Activated CD8-positive, alpha-beta T cell treated with anti-CD3 and anti-CD28 coated beads, Interleukin-2, amount 10 ng/mL, durations not matched to agents 7 days and 5 days (primary cell): ENCODE measurements at regions of chr17 and their contacts with region 1.

Region 1: GRCh38 chr17:31373150-31374093 is 18.1 kb upstream of the RAB11FIP4 start:
- DNase-seq: peak; percentile 60
- ATAC-seq: peak; percentile 93
- H3K4me3 Mint-ChIP-seq: no peak overlapping the region
- H3K27ac Mint-ChIP-seq: no peak overlapping the region
- H3K4me1 Mint-ChIP-seq: peaks cover 16% of the 10 kb centered on the region
- H3K27me3 Mint-ChIP-seq: no peaks in the 10 kb centered on the region

Region 2: DNA sequence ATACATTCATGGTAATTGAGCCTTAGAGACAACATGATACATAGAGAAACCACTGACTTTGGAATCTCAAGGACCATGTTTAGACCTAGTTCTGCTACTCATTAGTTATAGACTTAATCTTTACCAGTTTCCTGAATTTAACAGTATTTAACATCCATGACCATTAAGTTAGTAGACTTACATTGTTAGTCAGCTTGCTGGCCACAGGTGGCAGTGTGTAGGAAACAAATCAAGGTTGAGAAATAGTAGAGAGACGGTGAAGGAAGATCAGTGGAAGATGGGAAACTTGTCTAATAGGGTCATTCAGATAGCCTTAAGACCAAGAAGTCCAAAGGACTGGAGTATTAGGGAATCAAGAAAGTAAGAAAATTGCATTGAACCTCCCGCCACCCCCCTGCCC is 107.4 kb before region 1 on chr17:
- CTCF ChIA-PET with region 1: interaction called, 16 read pairs
- POLR2A ChIA-PET with region 1: no interaction called
- DNase-seq: no peak
- ATAC-seq: no peak
- H3K4me3 Mint-ChIP-seq: no peak overlapping the region
- H3K27ac Mint-ChIP-seq: no peak overlapping the region
- H3K4me1 Mint-ChIP-seq: no peaks in the 10 kb centered on the region
- H3K27me3 Mint-ChIP-seq: no peaks in the 10 kb centered on the region

Region 3: GRCh38 chr17:31357831-31358394 is 15.5 kb before region 1 on chr17:
- CTCF ChIA-PET with region 1: interaction called, 11 read pairs
- POLR2A ChIA-PET with region 1: no interaction called
- DNase-seq: no peak
- ATAC-seq: no peak
- H3K4me3 Mint-ChIP-seq: no peak overlapping the region
- H3K27ac Mint-ChIP-seq: no peak overlapping the region
- H3K4me1 Mint-ChIP-seq: no peaks in the 10 kb centered on the region
- H3K27me3 Mint-ChIP-seq: no peaks in the 10 kb centered on the region

Region 4: DNA sequence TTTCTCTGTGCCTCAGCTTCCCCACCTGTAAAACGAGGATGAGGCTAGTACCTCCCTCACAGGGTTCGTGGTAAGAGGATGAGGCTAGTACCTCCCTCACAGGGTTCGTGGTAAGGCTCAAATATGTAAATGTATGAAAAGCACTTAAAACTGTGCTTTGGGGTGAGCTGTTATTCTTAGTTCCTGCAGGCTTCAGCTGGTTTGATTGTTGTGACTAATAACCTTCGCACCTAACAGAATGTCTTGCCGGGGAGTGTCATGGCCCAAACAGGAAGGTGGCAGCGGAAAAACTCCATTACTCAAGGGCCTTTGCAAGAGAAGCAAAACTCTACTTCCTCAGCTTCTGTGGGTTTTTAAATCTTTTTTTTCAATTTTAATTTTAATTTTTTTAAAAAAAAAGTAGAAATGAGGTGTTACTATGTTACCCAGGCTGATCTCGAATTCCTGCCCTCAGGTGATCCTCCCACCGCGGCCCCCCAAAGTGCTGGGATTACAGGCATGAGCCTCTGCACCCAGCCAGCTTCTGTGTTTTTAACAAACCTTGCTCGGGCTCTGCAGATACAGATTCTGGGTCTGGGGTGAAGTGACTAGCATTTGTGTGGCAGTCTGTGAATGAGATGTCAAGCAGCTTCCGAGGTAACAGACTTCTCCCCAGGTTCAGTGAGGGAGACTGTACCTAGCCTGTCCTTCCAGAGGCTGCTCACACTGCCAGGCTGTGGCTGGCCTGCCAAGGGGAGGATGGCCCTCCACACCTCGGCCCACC is 121.0 kb after region 1 on chr17:
- CTCF ChIA-PET with region 1: no interaction called
- POLR2A ChIA-PET with region 1: no interaction called
- DNase-seq: peak; percentile 83
- ATAC-seq: peak; percentile 74
- H3K4me3 Mint-ChIP-seq: peak overlapping the region; percentile 68
- H3K27ac Mint-ChIP-seq: peak overlapping the region; percentile 98
- H3K4me1 Mint-ChIP-seq: peaks cover 94% of the 10 kb centered on the region
- H3K27me3 Mint-ChIP-seq: no peaks in the 10 kb centered on the region